Mammary epithelial cell (primary cell): ENCODE measurements at regions of chr9 and their contacts with region 1.

Region 1: DNA sequence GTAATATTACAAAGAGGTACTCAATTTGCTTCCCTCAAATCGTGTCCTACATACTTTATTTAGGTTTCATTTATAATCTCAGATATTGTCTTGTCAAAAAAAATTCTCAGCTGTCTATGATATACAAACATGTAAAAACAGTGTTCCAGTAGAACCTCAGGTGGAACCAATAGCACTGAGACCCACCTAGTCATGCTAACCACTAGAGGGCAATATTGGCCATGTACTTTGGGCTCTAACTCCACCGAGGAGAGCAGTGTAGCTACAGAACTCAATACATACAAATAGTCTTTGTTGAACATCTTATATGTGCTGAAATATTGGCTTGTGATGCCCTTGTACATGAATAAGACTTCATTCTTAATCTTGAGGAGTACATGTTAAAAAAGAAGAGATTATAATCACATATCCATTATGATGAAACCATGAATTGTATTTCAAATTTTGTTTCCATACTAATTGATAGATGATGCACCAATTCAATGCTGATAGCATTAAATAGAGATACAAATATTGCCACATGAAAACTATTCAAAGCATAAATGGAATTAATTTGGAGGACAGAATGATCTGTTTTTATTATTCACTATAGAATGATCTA is 71.2 kb upstream of the CNTLN start:
- DNase-seq: peak; percentile 31
- H3K4me3 ChIP-seq: no peak overlapping the region
- H3K27ac ChIP-seq: no peak overlapping the region
- H3K4me1 ChIP-seq: no peaks in the 10 kb centered on the region
- H3K27me3 ChIP-seq: no peaks in the 10 kb centered on the region
- CTCF ChIP-seq: peak; percentile 83 to 87

Region 2: DNA sequence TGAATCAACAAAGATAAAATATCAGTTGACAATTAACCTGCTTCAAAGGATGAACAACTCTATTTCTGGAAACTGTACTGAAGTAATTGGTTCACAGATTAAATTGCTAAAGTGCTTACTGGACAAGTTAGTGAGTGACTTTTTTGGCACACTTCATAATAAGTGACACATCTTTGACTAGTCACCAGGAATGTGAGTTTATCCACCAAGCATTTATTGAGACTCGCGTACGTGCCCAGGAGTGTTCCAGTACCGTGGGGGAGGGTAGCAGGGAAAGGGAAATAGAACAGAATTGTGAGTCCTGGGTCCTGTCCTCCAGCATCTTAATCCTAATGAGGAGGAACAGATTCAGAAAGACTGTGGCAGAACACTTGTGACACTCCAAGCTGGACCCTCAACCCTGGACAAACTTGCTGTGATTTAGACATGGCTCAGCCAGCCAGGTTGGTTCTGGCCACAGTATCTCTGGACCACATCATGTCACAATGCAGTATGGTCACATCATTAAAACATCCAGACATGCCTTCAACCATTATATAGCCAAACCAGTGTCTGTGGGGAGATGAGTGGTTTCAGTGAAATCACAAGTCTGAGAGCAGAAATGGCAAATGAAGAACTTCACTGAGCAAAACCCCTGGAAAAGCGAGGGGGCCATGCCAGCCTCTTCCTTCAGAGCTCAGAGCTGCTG is 816.3 kb before region 1 on chr9:
- CTCF ChIA-PET with region 1: no interaction called
- dilution Hi-C with region 1: no loop called
- in situ Hi-C with region 1: no loop called
- intact Hi-C with region 1: no loop called
- DNase-seq: peak; percentile 42
- H3K4me3 ChIP-seq: no peak overlapping the region
- H3K27ac ChIP-seq: no peak overlapping the region
- H3K4me1 ChIP-seq: peaks cover 5% of the 10 kb centered on the region
- H3K27me3 ChIP-seq: no peaks in the 10 kb centered on the region
- CTCF ChIP-seq: no peak

Region 3: GRCh38 chr9:16960084-16960483 is 103.6 kb before region 1 on chr9:
- CTCF ChIA-PET with region 1: no interaction called
- dilution Hi-C with region 1: no loop called
- in situ Hi-C with region 1: no loop called
- intact Hi-C with region 1: no loop called
- DNase-seq: peak; percentile 29
- H3K4me3 ChIP-seq: no peak overlapping the region
- H3K27ac ChIP-seq: no peak overlapping the region
- H3K4me1 ChIP-seq: no peaks in the 10 kb centered on the region
- H3K27me3 ChIP-seq: no peaks in the 10 kb centered on the region
- CTCF ChIP-seq: no peak

Region 4: GRCh38 chr9:17402309-17402708 is 338.7 kb after region 1 on chr9:
- CTCF ChIA-PET with region 1: no interaction called
- dilution Hi-C with region 1: no loop called
- in situ Hi-C with region 1: no loop called
- intact Hi-C with region 1: loop called (anchors 1 kb)
- DNase-seq: no peak
- H3K4me3 ChIP-seq: no peak overlapping the region
- H3K27ac ChIP-seq: no peak overlapping the region
- H3K4me1 ChIP-seq: no peaks in the 10 kb centered on the region
- H3K27me3 ChIP-seq: no peaks in the 10 kb centered on the region
- CTCF ChIP-seq: no peak